A549 (cell line): ENCODE measurements at regions of chr11 and their contacts with region 1.

Region 1: GRCh38 chr11:75248690-75249268 is 8.2 kb downstream of the TPBGL start:
- DNase-seq: peak; percentile 87 to 90
- ATAC-seq: peak; percentile 79 to 92
- H3K4me3 ChIP-seq: no peak overlapping the region
- H3K27ac ChIP-seq: no peak overlapping the region
- H3K4me1 ChIP-seq: no peaks in the 10 kb centered on the region
- CTCF ChIP-seq: peak; percentile 100
- EP300 ChIP-seq: no peak
- POLR2A ChIP-seq: no peak
- RAD21 ChIP-seq: peak; percentile 98 to 99

Region 2: GRCh38 chr11:74937696-74938475 is 310.9 kb before region 1 on chr11:
- CTCF ChIA-PET with region 1: interaction called, 160 read pairs
- POLR2A ChIA-PET with region 1: no interaction called
- DNase-seq: no peak
- ATAC-seq: no peak
- H3K4me3 ChIP-seq: no peak overlapping the region
- H3K27ac ChIP-seq: no peak overlapping the region
- H3K4me1 ChIP-seq: no peaks in the 10 kb centered on the region
- CTCF ChIP-seq: no peak
- EP300 ChIP-seq: no peak
- POLR2A ChIP-seq: no peak
- RAD21 ChIP-seq: no peak

Region 3: GRCh38 chr11:75150879-75151278 is 97.9 kb before region 1 on chr11 and contains the start of gene SLCO2B1:
- CTCF ChIA-PET with region 1: interaction called, 445 read pairs
- POLR2A ChIA-PET with region 1: no interaction called
- DNase-seq: no peak
- ATAC-seq: peak in 1 of 2 experiments; percentile 18; a peak in 1 of 6 replicates
- H3K4me3 ChIP-seq: no peak within 1 kb of the TSS
- H3K27ac ChIP-seq: no peak within 1 kb of the TSS
- H3K4me1 ChIP-seq: peaks cover 8% of the 10 kb centered on the region; the same call in 2 of the 3 replicates
- CTCF ChIP-seq: no peak
- EP300 ChIP-seq: no peak
- POLR2A ChIP-seq: no peak
- RAD21 ChIP-seq: no peak
- polyA plus RNA-seq, gene SLCO2B1: 4.6 and 4.9 TPM in 2 replicates

Region 4: GRCh38 chr11:75214411-75214821 is 34.4 kb before region 1 on chr11:
- CTCF ChIA-PET with region 1: interaction called, 14 read pairs
- POLR2A ChIA-PET with region 1: no interaction called
- DNase-seq: peak; percentile 79 to 80
- ATAC-seq: peak; percentile 87 to 98
- H3K4me3 ChIP-seq: no peak overlapping the region
- H3K27ac ChIP-seq: no peak overlapping the region
- H3K4me1 ChIP-seq: no peaks in the 10 kb centered on the region
- CTCF ChIP-seq: peak; percentile 15; the same call in 1 of the 3 replicates
- EP300 ChIP-seq: no peak
- POLR2A ChIP-seq: no peak
- RAD21 ChIP-seq: peak in 1 of 2 experiments; percentile 21; a peak in 1 of 5 replicates

Region 5: GRCh38 chr11:75263944-75264349 is 15.2 kb after region 1 on chr11:
- CTCF ChIA-PET with region 1: interaction called, 77 read pairs
- POLR2A ChIA-PET with region 1: no interaction called
- DNase-seq: no peak
- ATAC-seq: no peak; a peak in 1 of 6 replicates
- H3K4me3 ChIP-seq: no peak overlapping the region
- H3K27ac ChIP-seq: peak overlapping the region; percentile 19 to 43; a peak in 1 of 6 replicates
- H3K4me1 ChIP-seq: peaks cover 9% of the 10 kb centered on the region; the same call in 1 of the 3 replicates
- CTCF ChIP-seq: no peak
- EP300 ChIP-seq: no peak
- POLR2A ChIP-seq: no peak
- RAD21 ChIP-seq: no peak